Activated CD4-positive, alpha-beta memory T cell treated with anti-CD3 and anti-CD28 coated beads, Interleukin-2, amount 10 ng/mL, durations not matched to agents 7 days and 5 days (primary cell): ENCODE measurements at regions of chrX and their contacts with region 1.

Region 1: DNA sequence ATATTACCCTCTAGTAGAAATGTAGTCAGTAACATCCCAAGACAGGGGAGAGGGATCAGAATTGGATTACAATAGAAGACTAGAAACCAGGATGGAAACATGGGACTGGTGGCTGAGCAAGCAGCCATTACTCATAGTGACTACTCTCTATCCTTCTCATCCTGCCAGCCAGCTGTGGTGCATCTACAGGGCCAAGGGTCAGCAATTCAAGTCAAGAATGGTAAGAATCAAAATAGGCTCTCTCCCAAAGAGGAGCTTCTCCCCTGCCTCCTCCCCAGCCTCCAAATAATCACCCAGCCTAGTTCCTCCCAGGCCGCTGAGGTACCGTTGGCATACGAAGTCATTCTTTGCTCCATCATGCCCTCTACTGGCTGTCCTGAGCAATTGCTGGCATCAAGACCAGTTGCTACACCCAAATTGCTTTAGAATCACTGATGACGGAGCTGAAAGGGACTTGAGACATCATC is 19.4 kb downstream of the AWAT2 start:
- DNase-seq: peak; percentile 49
- H3K4me3 Mint-ChIP-seq: no peak overlapping the region
- H3K27ac Mint-ChIP-seq: no peak overlapping the region
- H3K4me1 Mint-ChIP-seq: peaks cover 41% of the 10 kb centered on the region
- H3K27me3 Mint-ChIP-seq: no peaks in the 10 kb centered on the region

Region 2: DNA sequence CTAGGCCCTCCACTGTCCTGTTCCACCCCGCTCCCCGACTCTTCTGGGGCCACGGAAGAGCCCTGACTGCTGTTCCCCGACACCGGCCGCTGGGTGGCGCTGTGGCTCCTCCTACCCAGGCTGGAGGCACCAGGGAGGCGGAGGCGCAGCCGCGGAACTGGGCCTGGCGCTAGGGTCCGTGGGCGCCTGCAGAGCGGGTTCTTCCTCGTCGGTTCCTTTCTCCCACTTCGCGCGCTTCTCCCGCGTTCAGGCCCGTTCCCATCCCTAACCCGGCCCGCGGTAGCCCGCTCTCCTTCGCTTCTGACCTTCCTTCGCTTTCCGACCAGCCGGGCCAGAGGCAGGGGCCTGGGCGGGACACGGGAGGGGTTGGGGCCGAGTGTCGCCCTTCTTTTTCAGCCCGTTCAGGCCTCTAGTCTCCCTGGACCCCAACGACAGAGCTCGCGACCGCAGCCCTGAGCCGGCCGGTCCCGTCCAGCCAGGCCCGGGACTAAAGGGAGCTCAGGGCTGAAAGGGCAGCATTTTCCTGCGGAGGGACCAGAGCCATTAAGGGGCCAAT is 491.9 kb before region 1 on chrX:
- CTCF ChIA-PET with region 1: interaction called, 19 read pairs
- POLR2A ChIA-PET with region 1: no interaction called
- DNase-seq: peak; percentile 78
- H3K4me3 Mint-ChIP-seq: no peak overlapping the region
- H3K27ac Mint-ChIP-seq: no peak overlapping the region
- H3K4me1 Mint-ChIP-seq: peaks cover 15% of the 10 kb centered on the region
- H3K27me3 Mint-ChIP-seq: peaks cover 9% of the 10 kb centered on the region

Region 3: DNA sequence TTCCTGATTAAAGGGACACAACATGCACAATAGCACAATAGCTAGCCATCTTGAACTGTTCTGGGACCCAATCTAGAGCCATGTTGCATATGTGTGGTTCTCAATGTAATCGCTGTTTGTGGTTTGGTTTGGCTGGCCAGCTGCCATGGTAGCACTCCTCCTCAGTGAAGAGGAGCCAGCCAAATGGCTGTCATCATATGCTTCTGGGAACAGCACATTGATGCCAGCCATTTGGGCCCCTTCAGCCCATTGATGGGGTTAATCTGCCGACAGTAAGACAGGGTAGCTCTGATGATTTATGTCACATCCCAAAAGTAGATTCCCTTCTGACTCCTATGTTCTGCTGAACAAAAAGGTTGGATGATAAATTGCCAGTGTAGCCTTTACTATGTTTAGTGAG is 29.1 kb before region 1 on chrX:
- CTCF ChIA-PET with region 1: no interaction called
- POLR2A ChIA-PET with region 1: no interaction called
- DNase-seq: no peak
- H3K4me3 Mint-ChIP-seq: no peak overlapping the region
- H3K27ac Mint-ChIP-seq: no peak overlapping the region
- H3K4me1 Mint-ChIP-seq: no peaks in the 10 kb centered on the region
- H3K27me3 Mint-ChIP-seq: no peaks in the 10 kb centered on the region